Calu3 (cell line): ENCODE measurements at regions of chr17 and their contacts with region 1.

Region 1: DNA sequence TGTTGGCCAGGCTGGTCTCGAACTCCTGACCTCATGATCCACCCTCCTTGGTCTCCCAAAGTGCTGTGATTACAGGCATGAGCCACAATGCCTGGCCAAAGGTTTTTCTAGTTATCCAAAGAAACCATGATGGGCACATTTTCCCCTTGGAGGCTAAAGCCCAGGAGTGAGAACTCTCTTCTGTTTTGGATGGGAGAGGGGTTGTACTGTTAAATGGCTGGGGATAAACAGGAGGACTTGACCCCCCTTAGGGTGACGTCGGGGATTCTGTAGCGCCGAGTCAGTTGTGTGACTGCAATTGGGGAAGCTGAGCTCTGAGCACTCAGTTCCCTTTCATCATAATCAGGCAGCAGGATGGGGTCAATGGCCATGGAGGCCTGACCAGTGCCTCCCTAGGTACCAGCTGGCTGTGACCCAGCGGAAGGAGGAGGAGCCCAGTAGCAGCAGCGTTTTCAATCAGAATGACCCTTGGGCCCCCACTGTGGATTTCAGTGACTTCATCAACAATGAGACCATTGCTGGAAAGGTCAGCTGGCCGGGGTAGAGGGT is 4.1 kb downstream of the AOC3 start:
- DNase-seq: no peak
- H3K4me3 Mint-ChIP-seq: no peak overlapping the region
- H3K27ac Mint-ChIP-seq: no peak overlapping the region
- H3K4me1 Mint-ChIP-seq: no peaks in the 10 kb centered on the region
- H3K27me3 Mint-ChIP-seq: peaks cover 36% of the 10 kb centered on the region
- CTCF ChIP-seq: no peak

Region 2: DNA sequence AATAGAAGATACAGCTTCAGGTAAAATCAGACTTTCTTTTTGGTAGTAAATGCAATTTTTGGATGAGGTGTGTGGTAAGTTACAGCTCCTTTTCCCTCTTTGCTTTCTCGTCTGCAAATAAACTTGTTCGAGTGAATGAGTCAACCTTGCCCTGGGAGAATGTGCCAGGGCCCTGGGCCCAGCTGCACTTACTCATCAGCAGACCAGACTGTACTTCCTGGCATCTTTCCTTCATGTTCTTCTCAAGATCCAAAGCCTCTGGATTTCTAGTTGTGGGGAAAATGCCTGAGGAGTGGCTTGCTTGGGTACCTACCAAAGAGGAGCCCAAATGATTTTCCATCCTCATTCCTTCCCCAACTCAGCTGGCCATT is 40.0 kb after region 1 on chr17:
- CTCF ChIA-PET with region 1: no interaction called
- intact Hi-C with region 1: loop called (anchors 5 kb)
- DNase-seq: peak; percentile 70
- H3K4me3 Mint-ChIP-seq: peak overlapping the region; percentile 2
- H3K27ac Mint-ChIP-seq: no peak overlapping the region
- H3K4me1 Mint-ChIP-seq: peaks cover 23% of the 10 kb centered on the region
- H3K27me3 Mint-ChIP-seq: no peaks in the 10 kb centered on the region
- CTCF ChIP-seq: no peak

Region 3: DNA sequence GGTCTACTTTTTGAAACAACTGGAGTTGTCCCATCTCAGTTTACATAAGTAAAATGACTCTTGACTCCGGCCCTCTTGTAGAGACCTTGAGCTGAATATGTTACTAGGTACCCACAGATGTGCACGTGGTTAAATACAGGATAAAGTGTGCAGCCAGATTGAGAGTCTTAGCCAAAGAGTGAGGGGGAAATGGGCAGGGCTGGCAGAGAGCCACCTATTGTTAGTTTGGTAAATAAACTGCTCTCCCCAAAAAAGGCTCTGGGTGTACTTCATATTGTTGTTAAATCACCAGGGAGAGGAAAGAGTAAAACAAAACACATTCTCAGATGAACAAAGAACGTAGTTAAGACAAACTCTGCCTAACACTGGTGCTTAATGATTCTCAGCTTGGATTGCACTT is 65.8 kb after region 1 on chr17:
- CTCF ChIA-PET with region 1: no interaction called
- intact Hi-C with region 1: no loop called
- DNase-seq: peak; percentile 27
- H3K4me3 Mint-ChIP-seq: no peak overlapping the region
- H3K27ac Mint-ChIP-seq: no peak overlapping the region
- H3K4me1 Mint-ChIP-seq: no peaks in the 10 kb centered on the region
- H3K27me3 Mint-ChIP-seq: peaks cover 10% of the 10 kb centered on the region
- CTCF ChIP-seq: no peak